ENCODE measurements at regions of chr4 and their contacts with region 1.

Region 1: GRCh38 chr4:41177016-41177415 is 37.3 kb downstream of the APBB2 start:
- DNase-seq: peak; percentile 64
- H3K4me3 ChIP-seq: no peak overlapping the region
- H3K27ac ChIP-seq: peak overlapping the region; percentile 72
- H3K4me1 ChIP-seq: peaks cover 59% of the 10 kb centered on the region
- H3K27me3 ChIP-seq: no peaks in the 10 kb centered on the region
- CTCF ChIP-seq: no peak
- POLR2A ChIP-seq: no peak

Region 2: DNA sequence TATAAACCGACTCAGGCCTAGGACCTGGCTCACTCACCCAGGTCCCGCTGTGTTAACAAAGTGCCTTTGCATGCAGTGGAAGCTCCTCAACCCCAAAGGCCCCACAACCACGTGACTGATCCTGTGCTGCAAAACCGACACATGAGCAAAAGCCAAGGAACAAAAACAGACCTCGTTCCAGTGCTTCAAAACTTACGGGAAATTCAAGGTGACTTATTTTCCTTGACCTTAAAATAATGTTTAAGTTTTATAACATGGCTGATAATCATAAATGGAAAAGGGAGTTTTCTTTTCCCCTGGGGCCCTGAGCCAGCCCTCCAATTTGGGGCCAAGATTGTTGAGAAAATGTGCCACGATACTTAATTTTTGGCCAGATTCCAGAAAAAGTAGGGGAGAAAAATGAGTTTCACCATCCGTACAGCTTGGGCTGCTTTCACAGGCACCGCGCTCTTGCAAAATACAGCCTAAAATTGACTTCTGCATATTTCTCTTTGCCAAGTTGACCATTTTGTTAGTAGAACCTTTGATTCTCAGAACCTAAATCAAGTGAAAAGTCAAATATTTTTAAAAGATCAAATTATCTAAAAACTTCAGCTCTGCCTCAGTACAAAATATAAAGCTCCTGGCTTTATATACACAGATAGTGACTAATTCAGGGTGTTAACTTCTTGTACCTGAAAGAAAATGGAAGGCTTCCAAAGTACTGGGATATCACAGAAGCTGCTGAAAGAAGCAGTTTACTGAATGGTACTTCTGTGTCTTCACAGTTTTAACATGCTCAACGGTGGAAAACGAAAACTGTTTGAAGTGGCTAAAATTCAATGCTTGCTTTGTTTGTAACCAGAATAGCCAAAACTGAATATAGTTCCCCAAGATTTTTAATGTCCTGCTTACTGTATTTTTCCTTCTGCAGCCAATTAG is 56.5 kb before region 1 on chr4:
- CTCF ChIA-PET with region 1: no interaction called
- POLR2A ChIA-PET with region 1: no interaction called
- dilution Hi-C with region 1: no loop called
- intact Hi-C with region 1: no loop called
- DNase-seq: peak; percentile 78
- H3K4me3 ChIP-seq: no peak overlapping the region
- H3K27ac ChIP-seq: peak overlapping the region; percentile 45
- H3K4me1 ChIP-seq: peaks cover 14% of the 10 kb centered on the region
- H3K27me3 ChIP-seq: no peaks in the 10 kb centered on the region
- CTCF ChIP-seq: no peak
- POLR2A ChIP-seq: no peak

Region 3: DNA sequence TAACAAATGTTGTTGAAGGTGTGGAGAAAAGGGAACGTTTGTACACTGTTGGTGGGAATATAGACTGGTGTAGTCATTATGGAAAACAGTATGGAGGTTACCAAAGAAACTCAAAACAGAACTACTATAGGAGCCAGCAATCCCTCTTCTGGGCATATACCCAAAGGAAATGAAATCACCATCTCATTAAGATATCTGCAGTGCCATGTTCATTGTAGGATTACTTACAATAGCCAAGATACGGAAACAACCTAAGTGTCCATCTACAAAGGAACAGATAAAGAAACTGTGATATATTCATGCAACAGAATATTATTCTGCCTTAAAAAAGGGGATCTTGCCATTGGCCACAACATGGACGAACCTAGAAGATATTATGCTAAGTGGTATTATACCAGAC is 15.1 kb after region 1 on chr4:
- CTCF ChIA-PET with region 1: interaction called, 8 read pairs
- POLR2A ChIA-PET with region 1: interaction called, 5 read pairs
- dilution Hi-C with region 1: no loop called
- intact Hi-C with region 1: loop called (anchors 2 kb)
- DNase-seq: peak; percentile 86
- H3K4me3 ChIP-seq: no peak overlapping the region
- H3K27ac ChIP-seq: peak overlapping the region; percentile 53
- H3K4me1 ChIP-seq: peaks cover 26% of the 10 kb centered on the region
- H3K27me3 ChIP-seq: no peaks in the 10 kb centered on the region
- CTCF ChIP-seq: no peak
- POLR2A ChIP-seq: no peak

Region 4: DNA sequence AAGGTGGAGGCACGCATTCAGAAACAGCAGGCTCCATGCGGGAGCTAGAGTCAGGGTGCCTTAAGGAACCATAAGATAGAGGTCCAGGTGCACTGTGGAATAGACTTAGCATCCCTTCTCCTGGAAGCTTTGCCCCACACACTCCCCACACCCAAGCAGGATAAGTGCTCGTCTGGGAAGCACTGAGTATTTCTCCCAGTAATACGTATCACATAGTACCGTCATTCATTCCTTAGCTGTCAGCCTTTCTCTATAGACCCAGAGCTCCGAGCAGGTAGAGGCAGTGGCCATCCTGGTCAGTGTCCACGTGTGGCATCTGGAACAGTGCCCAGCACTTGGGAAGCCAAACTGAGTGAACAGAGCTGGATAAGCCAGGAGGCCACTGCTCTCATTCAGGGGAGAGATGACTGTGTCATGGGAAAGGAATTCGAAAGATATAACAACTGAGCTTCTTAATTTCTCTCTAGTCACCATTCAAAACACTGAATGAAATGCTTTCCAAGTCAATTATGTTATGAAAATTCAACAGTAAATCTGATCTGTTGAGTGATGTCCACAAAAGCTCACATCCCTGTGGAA is 27.5 kb after region 1 on chr4:
- CTCF ChIA-PET with region 1: interaction called, 22 read pairs
- POLR2A ChIA-PET with region 1: interaction called, 3 read pairs
- dilution Hi-C with region 1: no loop called
- intact Hi-C with region 1: no loop called
- DNase-seq: peak; percentile 80
- H3K4me3 ChIP-seq: no peak overlapping the region
- H3K27ac ChIP-seq: peak overlapping the region; percentile 63
- H3K4me1 ChIP-seq: peaks cover 85% of the 10 kb centered on the region
- H3K27me3 ChIP-seq: no peaks in the 10 kb centered on the region
- CTCF ChIP-seq: no peak
- POLR2A ChIP-seq: no peak

Measured in endothelial cell of umbilical vein (primary cell).